Activated T-helper 1 cell treated with anti-CD3 and anti-CD28 coated beads, Interleukin-12 subunit alpha, Interleukin-12 subunit beta, Interleukin-2, Interleukin-4 antibody, amounts not matched to agents 30 ng/mL and 10 ng/mL and 1 ng/mL, durations not matched to agents 14 hours and 24 hours and 36 hours (primary cell): ENCODE measurements at regions of chr18 and their contacts with region 1.

Region 1: GRCh38 chr18:8608795-8609658 is at the start of gene RAB12:
- DNase-seq: peak; percentile 83
- H3K4me3 Mint-ChIP-seq: peak within 1 kb of the TSS; percentile 91
- H3K27ac Mint-ChIP-seq: peak within 1 kb of the TSS; percentile 88
- H3K4me1 Mint-ChIP-seq: peaks cover 50% of the 10 kb centered on the region
- H3K27me3 Mint-ChIP-seq: peaks cover 12% of the 10 kb centered on the region
- total RNA-seq, gene RAB12: 18.9 and 19.2 TPM in 2 replicates

Region 2: GRCh38 chr18:8623549-8624106 is 14.6 kb after region 1 on chr18:
- intact Hi-C with region 1: loop called (anchors 1 kb)
- DNase-seq: no peak
- H3K4me3 Mint-ChIP-seq: peak overlapping the region; percentile 45
- H3K27ac Mint-ChIP-seq: peak overlapping the region; percentile 52
- H3K4me1 Mint-ChIP-seq: peaks cover 46% of the 10 kb centered on the region
- H3K27me3 Mint-ChIP-seq: no peaks in the 10 kb centered on the region

Region 3: DNA sequence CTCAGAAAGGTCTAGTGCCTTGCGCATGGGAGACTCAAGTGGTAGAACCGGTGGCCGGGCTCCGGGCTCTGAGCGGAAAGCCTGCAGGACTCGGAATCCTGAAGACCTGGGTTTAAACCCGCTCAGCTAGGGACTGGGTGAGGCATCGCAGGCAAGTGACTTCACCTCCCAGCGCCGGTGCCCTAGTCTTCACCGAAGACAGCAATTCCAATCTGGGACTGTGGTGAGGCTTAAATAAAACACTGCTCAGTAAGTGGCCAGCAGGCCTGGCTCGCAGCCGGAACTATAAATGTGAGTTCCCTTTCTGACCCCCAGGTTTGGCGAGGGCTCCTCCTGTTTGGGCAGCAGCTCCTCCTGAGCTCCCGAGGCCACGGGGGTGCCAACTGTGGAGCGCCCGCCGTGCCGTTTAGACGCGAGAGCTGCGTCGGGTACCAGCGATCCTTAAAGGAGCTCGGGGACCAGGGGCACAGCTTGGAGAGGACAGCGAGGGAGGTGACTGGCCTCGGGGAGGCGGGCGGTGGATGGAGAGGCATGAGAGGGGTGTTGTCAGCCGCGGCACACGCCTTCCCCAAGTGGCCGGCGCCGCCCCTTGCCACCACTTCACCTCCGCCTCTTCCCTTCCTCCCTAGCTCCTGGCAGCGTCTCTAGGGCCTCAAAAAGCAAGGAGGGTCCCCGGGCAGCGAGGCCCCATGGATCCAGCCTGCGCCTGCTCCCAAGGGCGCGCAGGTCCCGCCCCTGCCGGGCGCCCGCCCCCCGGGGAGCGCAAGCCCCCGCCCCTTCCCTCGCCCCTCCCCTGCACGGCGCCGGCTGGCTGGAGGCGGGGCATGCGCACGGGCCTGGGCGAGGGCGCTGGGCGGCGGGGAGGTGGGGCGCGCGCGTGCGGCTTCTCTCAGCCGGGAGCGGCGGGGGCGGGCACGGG is 95.6 kb after region 1 on chr18:
- intact Hi-C with region 1: loop called (anchors 1 kb)
- DNase-seq: peak; percentile 80
- H3K4me3 Mint-ChIP-seq: peak overlapping the region; percentile 89
- H3K27ac Mint-ChIP-seq: peak overlapping the region; percentile 23
- H3K4me1 Mint-ChIP-seq: peaks cover 14% of the 10 kb centered on the region
- H3K27me3 Mint-ChIP-seq: peaks cover 69% of the 10 kb centered on the region